ENCODE measurements at regions of chrX and their contacts with region 1.

Region 1: DNA sequence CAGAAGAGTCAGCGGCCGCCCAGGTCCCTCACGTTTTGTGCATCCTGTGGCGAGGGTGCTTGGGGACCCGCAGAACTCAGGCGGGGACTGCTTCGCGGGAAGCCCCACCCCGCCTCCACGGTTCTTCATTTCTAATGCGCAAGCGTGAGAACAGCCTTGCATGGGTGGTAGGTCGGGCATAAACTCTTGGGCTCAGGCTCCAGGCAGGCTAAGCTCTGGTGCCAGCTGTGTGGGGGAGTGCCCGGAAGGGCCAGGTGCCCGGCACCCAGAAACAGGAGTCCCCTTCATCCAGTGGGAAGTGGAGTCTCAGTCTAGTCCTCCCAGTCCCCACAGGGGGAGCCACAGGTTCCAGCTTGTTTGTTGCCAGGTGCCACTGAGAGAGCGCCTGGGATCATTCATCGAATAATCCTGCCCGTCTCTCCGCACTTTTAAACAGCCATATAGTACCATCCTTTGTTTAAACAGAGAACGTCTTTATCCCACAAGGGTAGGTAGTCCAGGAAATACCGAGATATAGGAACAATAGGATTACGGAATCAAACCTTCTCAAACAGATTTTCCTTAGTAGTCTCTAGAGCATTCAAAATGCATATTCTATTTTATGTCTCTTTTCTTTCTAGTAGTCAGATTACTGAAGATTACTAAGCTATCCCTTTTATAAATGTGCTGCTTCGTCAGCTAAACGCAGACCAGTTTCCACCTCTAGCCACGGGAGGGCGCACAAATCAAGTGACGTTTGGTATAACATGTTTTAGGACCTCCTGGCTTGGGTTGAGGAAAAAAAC is 12.7 kb upstream of the RBBP7 start:
- DNase-seq: peak; percentile 86
- ATAC-seq: peak; percentile 87
- H3K4me3 Mint-ChIP-seq: peak overlapping the region; percentile 72
- H3K27ac Mint-ChIP-seq: peak overlapping the region; percentile 77
- H3K4me1 Mint-ChIP-seq: peaks cover 5% of the 10 kb centered on the region
- H3K27me3 Mint-ChIP-seq: no peaks in the 10 kb centered on the region
- CTCF ChIP-seq: peak; percentile 71

Region 2: GRCh38 chrX:16870095-16870860 is 12.6 kb before region 1 on chrX and contains the start of gene RBBP7:
- CTCF ChIA-PET with region 1: interaction called, 46 read pairs
- POLR2A ChIA-PET with region 1: interaction called, 7 read pairs
- intact Hi-C with region 1: no loop called
- DNase-seq: peak; percentile 87
- ATAC-seq: peak; percentile 85
- H3K4me3 Mint-ChIP-seq: peak within 1 kb of the TSS; percentile 96
- H3K27ac Mint-ChIP-seq: peak within 1 kb of the TSS; percentile 98
- H3K4me1 Mint-ChIP-seq: peaks cover 26% of the 10 kb centered on the region
- H3K27me3 Mint-ChIP-seq: no peaks in the 10 kb centered on the region
- CTCF ChIP-seq: no peak
- total RNA-seq, gene RBBP7: 197 to 201 TPM

Region 3: GRCh38 chrX:17046478-17047097 is 163.7 kb after region 1 on chrX:
- CTCF ChIA-PET with region 1: interaction called, 63 read pairs
- POLR2A ChIA-PET with region 1: interaction called, 5 read pairs
- intact Hi-C with region 1: loop called (anchors 10 kb)
- DNase-seq: peak; percentile 65
- ATAC-seq: no peak
- H3K4me3 Mint-ChIP-seq: no peak overlapping the region
- H3K27ac Mint-ChIP-seq: no peak overlapping the region
- H3K4me1 Mint-ChIP-seq: no peaks in the 10 kb centered on the region
- H3K27me3 Mint-ChIP-seq: no peaks in the 10 kb centered on the region
- CTCF ChIP-seq: peak; percentile 42